Calu3 (cell line): ENCODE measurements at regions of chr14 and their contacts with region 1.

Region 1: DNA sequence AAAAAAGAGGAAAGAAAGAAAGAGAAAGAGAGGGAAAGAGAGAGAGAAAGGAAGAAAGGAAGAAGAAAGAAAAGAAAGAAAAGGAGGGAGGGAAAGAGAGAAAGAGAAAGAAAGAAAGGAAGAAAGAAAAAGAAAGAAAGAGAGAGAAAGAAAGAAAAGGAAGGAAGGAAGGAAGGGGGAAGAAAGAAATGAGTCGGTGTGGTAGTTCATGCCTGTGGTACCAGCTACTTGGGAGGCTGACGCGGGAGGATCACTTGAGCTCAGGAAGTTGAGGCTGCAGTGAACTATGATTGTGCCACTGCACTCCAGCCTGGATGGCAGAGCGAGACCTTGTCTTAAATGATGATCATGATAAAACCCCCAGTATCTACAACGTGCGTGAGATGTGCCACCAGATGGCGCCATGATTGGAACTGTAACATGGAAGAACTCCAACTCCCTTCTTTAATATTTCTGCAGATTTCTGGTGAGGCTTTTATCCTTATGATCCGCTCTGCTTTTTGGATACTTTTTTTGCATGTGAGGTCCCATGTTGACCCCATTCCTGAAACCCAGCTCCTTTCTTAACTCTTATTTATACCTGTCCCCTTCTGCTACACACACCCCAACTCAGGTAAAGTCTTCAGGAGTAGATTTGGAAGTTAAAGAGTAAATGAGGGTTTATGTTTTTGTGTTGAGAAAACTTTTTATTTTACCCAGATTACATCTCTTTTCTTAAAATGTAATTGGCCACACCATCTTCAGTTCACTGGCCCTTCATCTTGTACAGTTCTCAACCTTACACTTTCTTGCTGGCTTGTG is 25.6 kb downstream of the RNASE10 start:
- DNase-seq: peak; percentile 66
- H3K4me3 Mint-ChIP-seq: no peak overlapping the region
- H3K27ac Mint-ChIP-seq: no peak overlapping the region
- H3K4me1 Mint-ChIP-seq: peaks cover 10% of the 10 kb centered on the region
- H3K27me3 Mint-ChIP-seq: peaks cover 41% of the 10 kb centered on the region
- CTCF ChIP-seq: peak; percentile 42

Region 2: GRCh38 chr14:20415782-20416206 is 115.2 kb before region 1 on chr14:
- CTCF ChIA-PET with region 1: no interaction called
- intact Hi-C with region 1: loop called (anchors 5 kb)
- DNase-seq: peak; percentile 55
- H3K4me3 Mint-ChIP-seq: no peak overlapping the region
- H3K27ac Mint-ChIP-seq: peak overlapping the region; percentile 18
- H3K4me1 Mint-ChIP-seq: peaks cover 36% of the 10 kb centered on the region
- H3K27me3 Mint-ChIP-seq: no peaks in the 10 kb centered on the region
- CTCF ChIP-seq: peak; percentile 30

Region 3: GRCh38 chr14:20469242-20469889 is 61.6 kb before region 1 on chr14 and contains the start of gene PNP:
- CTCF ChIA-PET with region 1: no interaction called
- intact Hi-C with region 1: loop called (anchors 5 kb)
- DNase-seq: peak; percentile 91
- H3K4me3 Mint-ChIP-seq: peak within 1 kb of the TSS; percentile 97
- H3K27ac Mint-ChIP-seq: peak within 1 kb of the TSS; percentile 97
- H3K4me1 Mint-ChIP-seq: peaks cover 27% of the 10 kb centered on the region
- H3K27me3 Mint-ChIP-seq: no peaks in the 10 kb centered on the region
- CTCF ChIP-seq: no peak
- total RNA-seq, gene PNP: 81.3 and 94.9 TPM in 2 replicates

Region 4: DNA sequence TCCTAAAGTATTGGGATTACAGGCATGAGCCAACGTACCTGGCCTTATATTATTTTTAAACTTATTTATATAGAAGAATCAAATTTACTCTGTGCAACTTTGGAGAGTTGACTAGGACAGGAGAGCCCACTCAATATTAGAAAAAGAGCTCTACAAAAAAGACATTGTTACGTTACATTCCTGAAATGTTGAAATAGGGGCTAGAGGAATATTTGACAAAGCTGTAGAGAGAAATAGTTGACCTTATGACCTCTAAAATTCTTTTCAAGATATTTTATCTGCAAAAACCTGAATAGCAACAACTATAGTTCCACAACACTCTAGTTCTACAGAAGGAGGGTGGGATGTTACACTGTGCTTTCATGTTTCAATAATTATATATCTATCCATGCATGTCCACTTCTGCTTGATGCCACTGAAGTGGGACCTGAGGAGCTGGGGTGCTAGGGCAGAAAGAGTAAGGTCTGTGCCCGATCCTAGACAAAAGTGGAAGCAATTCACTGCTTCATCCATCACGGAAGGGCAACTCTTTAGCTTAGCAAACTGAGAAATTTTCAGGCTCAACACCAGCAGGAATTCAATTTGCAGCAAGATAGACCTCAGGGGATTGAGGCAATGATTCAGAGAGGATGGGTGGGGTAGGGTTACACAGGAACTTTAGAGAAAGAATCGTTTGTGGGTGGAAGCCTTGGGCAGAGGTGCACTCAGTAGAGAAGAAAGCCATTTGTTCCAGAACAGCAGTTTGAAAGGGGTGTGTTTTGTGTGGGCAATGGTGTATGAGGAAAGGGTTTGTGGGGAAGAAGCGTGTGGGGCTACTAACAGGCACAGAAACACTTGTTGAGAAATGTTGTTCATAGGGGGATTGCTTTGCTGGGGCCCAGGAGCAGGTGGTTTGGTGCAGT is 41.6 kb before region 1 on chr14:
- CTCF ChIA-PET with region 1: no interaction called
- intact Hi-C with region 1: no loop called
- DNase-seq: no peak
- H3K4me3 Mint-ChIP-seq: no peak overlapping the region
- H3K27ac Mint-ChIP-seq: no peak overlapping the region
- H3K4me1 Mint-ChIP-seq: peaks cover 20% of the 10 kb centered on the region
- H3K27me3 Mint-ChIP-seq: no peaks in the 10 kb centered on the region
- CTCF ChIP-seq: no peak

Region 5: GRCh38 chr14:20690848-20691523 is 160.0 kb after region 1 on chr14:
- CTCF ChIA-PET with region 1: interaction called, 3 read pairs
- intact Hi-C with region 1: loop called (anchors 2 kb)
- DNase-seq: peak; percentile 54
- H3K4me3 Mint-ChIP-seq: no peak overlapping the region
- H3K27ac Mint-ChIP-seq: no peak overlapping the region
- H3K4me1 Mint-ChIP-seq: peaks cover 19% of the 10 kb centered on the region
- H3K27me3 Mint-ChIP-seq: no peaks in the 10 kb centered on the region
- CTCF ChIP-seq: peak; percentile 48